Posterior vena cava (tissue), 2 donors: ENCODE measurements at regions of chr6 and their contacts with region 1.

Region 1: GRCh38 chr6:148166339-148166968 is 176.2 kb upstream of the SASH1 start:
- DNase-seq: no peak

Region 2: DNA sequence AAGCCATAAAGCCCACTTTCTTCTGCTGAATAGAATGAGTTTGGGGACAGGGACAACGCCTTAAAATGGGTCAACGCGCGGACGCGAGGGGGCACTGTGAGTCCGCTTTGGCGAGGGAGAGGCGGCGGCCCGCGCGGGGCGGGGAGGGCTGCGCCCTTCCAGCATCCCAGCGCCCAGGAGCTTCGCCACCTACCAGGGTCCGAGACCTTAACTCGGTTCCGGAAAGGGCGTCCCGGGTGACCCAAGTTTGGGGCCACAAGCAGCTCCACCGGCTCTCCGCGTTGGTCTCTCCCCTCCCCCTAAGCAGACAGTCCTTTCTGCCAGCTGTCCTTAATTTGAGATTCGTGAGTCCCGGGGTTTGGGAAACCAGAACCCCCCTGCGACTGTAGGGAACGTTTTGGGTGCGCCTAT is 659.7 kb before region 1 on chr6:
- intact Hi-C with region 1: loop called (anchors 2 to 5 kb)
- DNase-seq: peak; percentile 89

Region 3: DNA sequence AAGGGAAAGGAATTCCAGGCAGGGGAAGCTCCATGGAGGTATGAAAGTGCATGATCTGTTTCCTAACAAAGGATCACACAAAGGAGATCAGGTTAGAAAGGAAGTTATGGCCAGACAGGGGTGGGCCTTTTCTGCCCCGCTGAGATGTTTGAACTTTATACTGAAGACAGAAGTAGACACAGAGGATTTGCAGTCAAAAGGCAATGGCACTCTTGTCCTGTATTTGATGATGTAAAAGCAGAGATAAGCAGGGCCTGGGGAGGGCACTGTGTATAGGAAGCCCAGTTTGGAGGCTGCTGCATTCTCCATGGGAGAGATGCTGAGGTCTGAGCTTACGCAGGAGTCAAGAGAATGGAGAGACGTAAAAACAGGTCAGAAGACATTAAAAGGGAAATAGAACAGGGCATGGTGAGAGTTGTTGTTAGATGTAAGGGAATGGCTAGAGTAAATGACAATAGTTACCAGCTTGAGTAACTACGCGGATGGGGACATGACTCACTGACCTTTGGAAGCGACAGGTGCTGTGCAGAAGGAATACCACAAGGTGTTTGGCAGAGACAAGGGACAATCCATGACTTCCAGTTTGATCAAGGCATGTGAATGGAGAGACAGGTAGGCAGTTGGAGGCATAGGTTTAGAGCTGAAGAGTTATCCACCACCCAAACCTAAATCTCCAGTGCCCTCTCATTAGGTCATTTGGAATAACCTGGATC is 14.4 kb before region 1 on chr6:
- intact Hi-C with region 1: no loop called
- DNase-seq: no peak